Head of caudate nucleus (tissue), 42 donors: ENCODE measurements at regions of chr22 and their contacts with region 1.

Region 1: DNA sequence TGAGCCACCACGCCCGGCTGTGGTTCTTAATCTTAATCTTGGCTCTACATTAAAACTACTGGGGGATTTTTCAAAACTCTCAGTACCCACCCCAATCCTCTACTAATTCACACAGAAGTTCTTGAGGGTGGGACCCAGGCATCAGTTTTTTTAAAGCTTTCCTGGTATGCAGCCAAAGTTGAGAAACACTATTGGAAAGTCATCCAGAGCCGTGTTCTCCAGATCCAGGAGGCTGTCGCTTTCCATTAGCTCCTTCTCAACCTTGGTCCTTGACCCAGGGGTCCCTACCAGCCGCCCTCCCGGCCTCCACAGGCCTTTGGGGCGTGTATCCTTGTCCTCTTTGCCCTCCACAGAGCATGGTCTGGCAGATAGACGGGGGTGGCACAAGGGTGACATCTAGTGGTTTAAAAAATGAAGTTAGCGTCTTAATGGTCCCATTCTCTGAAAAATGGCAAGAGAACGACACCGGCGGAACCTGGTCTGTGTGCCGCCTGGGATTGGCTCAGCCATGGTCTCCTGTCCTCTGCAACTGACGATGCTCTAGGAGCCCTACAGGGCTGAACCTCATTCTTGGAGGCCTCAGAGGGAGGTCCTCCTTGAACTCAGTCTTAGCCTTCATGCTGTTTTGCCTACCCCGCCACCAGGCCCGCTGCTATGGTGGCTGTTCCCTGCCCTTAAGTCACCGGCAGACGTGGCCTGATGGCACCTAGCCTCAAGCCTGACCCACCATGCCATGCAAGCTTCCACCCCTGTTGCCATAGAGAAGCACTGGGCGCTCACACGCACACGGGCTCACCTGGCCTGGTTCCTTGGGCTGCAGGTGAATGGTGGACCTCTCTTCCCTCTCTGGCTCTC is 152.0 kb upstream of the SYN3 start:
- DNase-seq: peak in 35 of 42 donors; percentile 4 to 71 (median 32)

Region 2: DNA sequence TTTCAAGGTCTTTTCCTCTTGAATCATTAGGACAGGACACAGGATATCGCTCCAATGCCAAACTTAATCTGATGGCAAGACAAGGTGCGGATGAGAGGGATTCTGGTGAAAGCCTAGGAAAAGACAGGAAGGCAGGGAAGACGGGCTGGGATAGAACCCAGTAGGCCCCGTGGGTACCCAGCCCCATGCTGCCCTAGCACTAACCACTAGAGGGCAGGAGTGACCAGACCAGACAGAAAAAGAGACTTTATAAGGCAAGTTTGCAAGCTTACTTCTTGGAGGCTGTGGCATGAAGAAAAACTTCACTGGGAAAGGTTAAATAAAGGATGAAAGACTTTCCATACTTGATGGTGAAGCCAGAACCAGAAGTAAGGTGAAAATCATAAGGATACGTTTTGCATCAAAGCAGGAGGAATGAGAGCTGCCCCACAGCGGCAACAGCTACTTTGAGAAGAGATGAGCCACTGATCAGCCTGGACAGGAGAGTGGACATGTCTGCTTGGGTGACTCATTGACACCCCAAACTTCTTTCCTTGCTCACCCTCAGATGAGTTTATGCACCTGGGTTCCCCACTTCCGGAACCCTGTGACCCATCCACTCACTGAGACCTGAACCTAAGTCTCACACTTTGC is 191.8 kb before region 1 on chr22:
- intact Hi-C with region 1: loop called (anchors 10 kb)
- DNase-seq: peak; percentile 28 to 88 (median 72)

Region 3: DNA sequence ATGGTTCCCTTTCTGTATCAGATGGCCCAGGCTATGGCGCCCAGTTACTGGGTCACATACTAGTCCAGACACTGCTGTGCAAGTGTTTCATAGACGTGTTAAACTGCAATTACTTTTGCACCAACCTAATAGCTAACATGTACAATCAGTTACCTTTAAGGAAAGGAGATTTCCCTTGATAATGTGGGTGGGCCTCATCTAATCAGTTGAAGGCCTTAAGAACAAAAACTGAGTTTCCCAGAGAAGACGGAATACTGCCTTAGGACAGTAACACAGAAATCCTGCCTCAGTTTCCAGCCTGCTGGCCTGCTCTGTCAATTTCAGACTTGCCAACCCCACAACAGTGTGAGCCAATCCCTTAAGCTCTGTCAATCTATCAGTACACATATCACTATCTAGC is 77.9 kb after region 1 on chr22:
- intact Hi-C with region 1: no loop called
- DNase-seq: no peak

Region 4: GRCh38 chr22:33553493-33553892 is 343.3 kb after region 1 on chr22:
- intact Hi-C with region 1: no loop called
- DNase-seq: no peak